Heart right ventricle (tissue), 16 donors: ENCODE measurements at regions of chr11 and their contacts with region 1.

Region 1: DNA sequence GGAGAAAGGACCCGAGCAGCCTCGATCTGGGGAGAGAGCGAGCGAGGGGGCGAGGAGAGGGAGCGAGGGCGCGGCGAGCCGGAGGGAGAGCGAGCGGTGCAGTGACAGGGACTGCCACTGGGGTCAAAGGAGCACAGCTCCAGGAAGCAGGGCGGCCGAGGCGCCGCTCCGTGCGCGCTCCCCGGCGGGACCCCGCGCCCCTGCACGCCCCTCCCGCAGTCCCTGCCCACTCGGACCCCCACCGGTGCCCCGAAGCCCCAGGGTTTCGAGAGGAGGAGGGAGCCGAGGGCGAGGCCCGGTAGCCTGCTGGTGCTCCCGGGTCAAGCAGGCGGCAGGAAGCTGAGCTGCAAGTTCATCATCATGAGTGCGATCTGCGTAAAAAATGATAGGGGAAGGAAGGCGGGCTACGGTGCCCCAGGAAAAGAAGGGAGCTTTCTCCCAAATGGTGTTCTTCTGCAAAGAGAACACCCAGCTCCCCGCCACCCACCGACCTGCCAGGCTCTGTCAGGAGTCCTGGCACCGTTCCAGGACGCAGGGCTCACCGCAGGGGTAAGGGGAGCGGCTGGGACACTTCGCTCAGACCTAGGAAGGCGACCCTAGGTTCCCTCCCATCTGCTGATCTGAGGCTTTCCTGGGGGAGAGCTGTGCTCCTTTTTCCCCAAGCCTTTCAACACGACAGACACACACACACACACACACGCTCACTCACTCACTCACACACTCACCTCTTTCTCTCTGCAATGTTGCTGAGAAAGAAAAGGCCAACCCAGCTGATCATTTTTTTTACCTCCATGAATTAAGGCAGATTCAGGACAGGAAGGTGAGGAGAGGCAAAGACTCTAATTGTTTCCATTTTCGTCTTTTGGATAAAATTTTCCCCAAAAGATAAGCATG is at the start of gene MPPED2:
- DNase-seq: peak; percentile 57 to 61
- ATAC-seq: peak; percentile 71 to 93 (median 84)
- H3K4me3 ChIP-seq: peak within 1 kb of the TSS; percentile 72 to 96 (median 90)
- H3K27ac ChIP-seq: peak within 1 kb of the TSS; percentile 47 to 95 (median 92)
- H3K4me1 ChIP-seq: peaks cover 0 to 20% (median 9%) of the 10 kb centered on the region in 9 donors
- H3K27me3 ChIP-seq: peaks cover 0 to 51% (median 0%) of the 10 kb centered on the region in 7 donors
- CTCF ChIP-seq: peak; percentile 16 to 64 (median 53)
- total RNA-seq, gene MPPED2: 6.5 to 15.1 (median 10.6) TPM

Region 2: GRCh38 chr11:30270671-30271070 is 315.8 kb before region 1 on chr11:
- intact Hi-C with region 1: no loop called
- DNase-seq: no peak
- ATAC-seq: no peak
- H3K4me3 ChIP-seq: no peak overlapping the region
- H3K27ac ChIP-seq: no peak overlapping the region
- H3K4me1 ChIP-seq: no peaks in the 10 kb centered on the region
- H3K27me3 ChIP-seq: peaks cover 0 to 3% (median 0%) of the 10 kb centered on the region in 7 donors
- CTCF ChIP-seq: no peak

Region 3: DNA sequence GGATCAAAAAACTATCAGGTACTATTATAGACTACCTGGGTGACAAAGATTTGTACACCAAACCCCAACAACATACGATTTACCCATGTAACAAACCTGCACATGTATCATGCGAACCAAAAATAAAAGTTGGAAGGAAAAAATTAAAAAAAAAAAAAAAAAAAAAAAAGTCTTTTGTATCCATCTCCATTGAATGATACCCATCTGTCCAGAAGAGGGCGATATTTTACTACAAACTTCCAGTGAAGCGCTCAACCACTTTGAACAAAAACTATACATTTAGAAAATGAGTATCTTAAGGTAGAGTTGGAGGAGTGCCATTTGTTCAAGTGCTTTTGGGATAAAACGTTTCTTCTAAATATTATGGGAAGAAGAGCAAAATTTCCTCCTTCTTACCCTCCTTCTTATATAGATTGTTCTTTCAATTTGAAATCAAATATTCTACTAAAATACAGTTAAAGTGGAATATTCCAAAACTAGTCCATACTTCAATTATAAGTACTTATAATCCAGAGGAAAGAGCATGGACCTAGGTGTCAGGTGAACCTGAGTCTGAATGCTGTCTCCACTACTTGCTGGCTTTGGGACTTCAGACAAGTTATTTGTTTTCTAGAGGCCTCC is 240.3 kb before region 1 on chr11:
- intact Hi-C with region 1: loop called in 5 of 10 experiments (anchors 5 to 10 kb)
- DNase-seq: peak in 1 of 2 donors; percentile 19
- ATAC-seq: peak in 5 of 8 donors; percentile 25 to 64 (median 62)
- H3K4me3 ChIP-seq: peak overlapping the region in 1 of 10 donors; percentile 13
- H3K27ac ChIP-seq: no peak overlapping the region
- H3K4me1 ChIP-seq: peaks cover 0 to 4% (median 0%) of the 10 kb centered on the region in 9 donors
- H3K27me3 ChIP-seq: no peaks in the 10 kb centered on the region
- CTCF ChIP-seq: peak; percentile 48 to 83 (median 67)

Region 4: DNA sequence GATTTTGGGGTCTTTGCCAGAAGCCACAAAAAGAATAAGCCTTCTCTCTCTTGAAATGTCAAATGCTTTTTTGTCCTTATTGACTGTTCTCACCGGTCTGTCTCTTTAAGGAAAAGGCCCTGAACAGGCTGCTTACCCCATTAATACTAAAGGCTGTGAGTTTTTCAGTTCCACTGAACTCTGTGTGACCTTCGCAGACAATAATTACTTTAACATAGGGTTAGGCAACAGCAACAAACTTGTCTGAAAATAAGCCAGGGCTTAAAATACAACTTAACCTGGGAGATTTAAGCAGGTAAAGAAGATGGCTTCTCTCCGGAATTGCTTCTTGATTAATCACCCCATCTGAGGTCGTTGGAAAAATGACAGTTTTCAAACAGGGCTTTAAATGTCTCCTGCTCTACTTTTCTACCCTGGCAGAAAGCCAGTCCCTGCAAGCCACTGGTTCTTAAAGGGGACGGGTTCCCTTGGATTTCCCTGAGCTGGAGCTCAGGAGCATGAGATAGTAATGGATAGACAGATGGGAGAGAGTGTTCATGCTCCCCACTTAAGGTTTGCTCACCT is 194.2 kb before region 1 on chr11:
- intact Hi-C with region 1: loop called in 1 of 10 experiments (anchors 5 kb)
- DNase-seq: peak in 1 of 2 donors; percentile 47
- ATAC-seq: peak; percentile 39 to 86 (median 77)
- H3K4me3 ChIP-seq: peak overlapping the region in 2 of 10 donors; percentile 5 to 29
- H3K27ac ChIP-seq: peak overlapping the region in 5 of 10 donors; percentile 1 to 13 (median 3)
- H3K4me1 ChIP-seq: peaks cover 5 to 25% (median 16%) of the 10 kb centered on the region in 9 donors
- H3K27me3 ChIP-seq: no peaks in the 10 kb centered on the region
- CTCF ChIP-seq: no peak

Region 5: GRCh38 chr11:30454132-30454531 is 132.4 kb before region 1 on chr11:
- intact Hi-C with region 1: loop called in 1 of 10 experiments (anchors 10 kb)
- DNase-seq: no peak
- ATAC-seq: peak in 6 of 8 donors; percentile 43 to 78 (median 65)
- H3K4me3 ChIP-seq: no peak overlapping the region
- H3K27ac ChIP-seq: peak overlapping the region in 4 of 10 donors; percentile 46 to 54 (median 52)
- H3K4me1 ChIP-seq: peaks cover 7 to 76% (median 42%) of the 10 kb centered on the region in 9 donors
- H3K27me3 ChIP-seq: no peaks in the 10 kb centered on the region
- CTCF ChIP-seq: no peak

Region 6: DNA sequence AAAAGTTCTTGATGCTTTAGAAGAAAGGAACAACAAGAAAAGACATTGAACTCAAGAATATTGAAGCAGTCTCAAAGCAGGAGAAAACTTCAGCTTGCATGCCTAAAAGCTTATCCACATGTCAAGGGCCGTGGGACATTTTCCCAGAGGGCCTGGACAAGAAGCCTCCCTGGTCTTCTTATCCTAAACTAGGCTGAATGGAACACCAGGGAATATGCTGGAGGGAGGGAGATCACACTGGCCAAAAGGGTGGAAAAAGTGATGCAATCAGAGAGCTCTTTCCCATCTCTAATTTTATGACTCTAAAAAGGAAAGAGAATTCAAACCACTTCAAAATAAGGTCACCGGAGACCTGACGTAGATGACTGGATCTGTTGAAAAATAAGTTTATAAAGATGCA is 107.6 kb before region 1 on chr11:
- intact Hi-C with region 1: loop called in 5 of 10 experiments (anchors 5 to 10 kb)
- DNase-seq: peak; percentile 44 to 82
- ATAC-seq: peak; percentile 86 to 95 (median 93)
- H3K4me3 ChIP-seq: no peak overlapping the region
- H3K27ac ChIP-seq: peak overlapping the region; percentile 12 to 77 (median 65)
- H3K4me1 ChIP-seq: peaks cover 8 to 85% (median 42%) of the 10 kb centered on the region in 9 donors
- H3K27me3 ChIP-seq: no peaks in the 10 kb centered on the region
- CTCF ChIP-seq: no peak

Region 7: DNA sequence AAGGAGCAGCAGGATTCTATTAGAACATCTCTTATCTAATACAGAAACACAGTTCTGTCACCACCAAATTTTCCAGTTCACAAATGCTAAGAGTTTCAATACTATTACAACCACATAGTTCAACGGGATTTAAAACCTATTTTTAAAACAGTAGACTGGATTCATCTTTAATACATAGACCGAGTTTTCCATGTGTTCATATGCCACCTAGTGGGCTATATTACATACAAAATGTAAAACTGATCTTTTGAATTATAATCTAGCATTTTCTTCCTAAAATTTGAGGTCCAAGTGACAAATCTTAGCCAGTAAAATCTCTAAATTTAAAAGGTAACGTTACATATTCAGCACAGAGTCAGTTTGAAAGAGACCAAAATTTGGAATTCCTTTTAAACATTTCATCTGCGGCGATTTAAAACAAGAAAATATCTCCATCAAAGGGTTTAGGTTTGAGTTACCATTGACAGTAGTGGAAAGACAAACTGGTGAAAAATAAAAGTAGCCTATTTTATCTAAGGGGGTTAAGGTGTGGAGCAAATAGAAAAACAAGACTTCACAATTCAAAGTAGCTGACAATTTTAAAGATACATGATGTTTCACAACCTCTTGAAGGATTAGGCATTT is 269.0 kb after region 1 on chr11:
- intact Hi-C with region 1: loop called in 3 of 10 experiments (anchors 10 kb)
- DNase-seq: no peak
- ATAC-seq: peak in 1 of 8 donors; percentile 55
- H3K4me3 ChIP-seq: no peak overlapping the region
- H3K27ac ChIP-seq: no peak overlapping the region
- H3K4me1 ChIP-seq: peaks cover 0 to 4% (median 0%) of the 10 kb centered on the region in 9 donors
- H3K27me3 ChIP-seq: no peaks in the 10 kb centered on the region
- CTCF ChIP-seq: peak in 8 of 9 donors; percentile 33 to 77 (median 62)

Region 8: GRCh38 chr11:30917859-30918478 is 331.5 kb after region 1 on chr11:
- intact Hi-C with region 1: loop called in 4 of 10 experiments (anchors 5 to 10 kb)
- DNase-seq: peak in 1 of 2 donors; percentile 15
- ATAC-seq: peak in 6 of 8 donors; percentile 37 to 67 (median 48)
- H3K4me3 ChIP-seq: no peak overlapping the region
- H3K27ac ChIP-seq: no peak overlapping the region
- H3K4me1 ChIP-seq: peaks cover 0 to 6% (median 0%) of the 10 kb centered on the region in 9 donors
- H3K27me3 ChIP-seq: peaks cover 0 to 13% (median 0%) of the 10 kb centered on the region in 7 donors
- CTCF ChIP-seq: peak; percentile 60 to 85 (median 80)